A673 (cell line): ENCODE measurements at regions of chr2 and their contacts with region 1.

Region 1: DNA sequence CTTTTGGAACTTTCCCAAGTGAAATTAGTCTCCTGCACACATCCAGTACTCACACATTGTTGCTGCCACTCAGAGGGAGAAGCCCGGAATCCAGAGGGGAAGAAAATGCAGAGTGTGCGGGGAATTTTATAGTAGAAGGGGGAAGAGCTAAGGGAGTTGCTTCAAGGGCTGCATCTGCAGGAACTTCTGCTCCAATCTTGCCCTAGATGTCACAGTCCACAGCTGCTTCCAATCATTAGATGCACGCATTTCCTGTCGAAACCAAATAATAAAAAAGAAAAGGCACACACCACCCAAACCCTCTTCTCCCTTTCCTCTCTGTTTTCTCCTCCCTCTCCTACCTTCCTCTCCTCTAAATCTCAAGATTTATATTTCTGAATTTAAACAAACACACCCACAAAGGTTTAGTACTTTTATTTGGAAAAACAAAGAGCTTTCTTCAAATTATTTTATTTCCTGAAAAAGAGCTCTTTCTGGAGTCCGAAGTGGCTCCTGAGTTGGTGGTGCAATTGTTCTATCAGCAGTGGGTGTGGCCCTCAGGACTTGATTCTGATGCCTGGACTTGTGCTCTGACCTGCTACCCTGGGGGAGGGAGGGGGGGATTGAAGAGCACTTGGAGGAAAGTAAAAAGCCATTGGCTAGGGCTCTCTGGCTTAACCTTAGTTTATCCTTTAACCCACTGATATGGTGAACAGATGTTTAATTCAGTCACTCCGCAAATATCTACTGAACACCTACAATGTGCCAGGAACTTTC is 72.0 kb downstream of the KCNE4 start:
- DNase-seq: peak; percentile 88
- H3K4me3 ChIP-seq: peak overlapping the region; percentile 11
- H3K27ac ChIP-seq: peak overlapping the region; percentile 84
- H3K4me1 ChIP-seq: peaks cover 75% of the 10 kb centered on the region
- H3K27me3 ChIP-seq: no peaks in the 10 kb centered on the region
- CTCF ChIP-seq: no peak

Region 2: DNA sequence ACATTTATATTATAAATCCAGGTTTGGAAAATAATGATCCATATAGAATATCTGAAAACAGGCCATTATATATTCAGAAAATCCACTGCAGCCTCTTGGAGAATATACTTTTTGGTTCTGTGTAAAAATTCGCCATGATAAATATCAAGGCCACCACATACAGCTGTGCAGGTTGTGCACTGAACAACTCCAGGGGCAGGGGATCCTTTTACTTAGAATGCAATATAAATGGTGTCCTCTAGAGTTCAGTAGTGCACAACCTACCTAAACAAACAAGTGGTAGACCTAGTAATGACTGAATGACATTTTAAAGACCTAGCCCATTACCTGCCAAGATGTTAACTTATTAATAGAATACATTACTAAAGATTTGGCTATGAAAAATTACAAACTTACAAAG is 430.2 kb before region 1 on chr2:
- CTCF ChIA-PET with region 1: no interaction called
- POLR2A ChIA-PET with region 1: no interaction called
- intact Hi-C with region 1: no loop called
- DNase-seq: peak; percentile 44
- H3K4me3 ChIP-seq: no peak overlapping the region
- H3K27ac ChIP-seq: no peak overlapping the region
- H3K4me1 ChIP-seq: peaks cover 15% of the 10 kb centered on the region
- H3K27me3 ChIP-seq: no peaks in the 10 kb centered on the region
- CTCF ChIP-seq: peak; percentile 44; the same call in 1 of the 2 replicates

Region 3: DNA sequence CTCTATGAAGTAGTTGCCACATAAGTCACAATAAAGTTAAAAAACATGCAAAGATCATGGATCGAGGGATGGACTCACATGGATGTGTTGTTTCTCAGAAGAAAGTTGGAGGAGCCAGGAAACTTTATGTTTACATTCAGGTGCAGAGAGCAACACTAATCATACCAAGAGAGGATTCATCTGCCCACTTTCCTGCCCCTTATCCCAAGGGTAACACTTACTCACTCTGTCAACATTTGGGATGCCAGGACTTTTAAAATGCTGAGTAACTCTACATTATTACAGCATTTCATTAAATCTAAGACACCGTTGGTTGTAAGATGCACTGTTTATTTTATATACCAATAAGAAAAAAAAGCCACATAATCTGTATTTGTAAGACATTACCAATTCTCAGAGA is 98.4 kb after region 1 on chr2:
- CTCF ChIA-PET with region 1: no interaction called
- POLR2A ChIA-PET with region 1: no interaction called
- intact Hi-C with region 1: no loop called
- DNase-seq: no peak
- H3K4me3 ChIP-seq: no peak overlapping the region
- H3K27ac ChIP-seq: no peak overlapping the region
- H3K4me1 ChIP-seq: no peaks in the 10 kb centered on the region
- H3K27me3 ChIP-seq: no peaks in the 10 kb centered on the region
- CTCF ChIP-seq: no peak

Region 4: DNA sequence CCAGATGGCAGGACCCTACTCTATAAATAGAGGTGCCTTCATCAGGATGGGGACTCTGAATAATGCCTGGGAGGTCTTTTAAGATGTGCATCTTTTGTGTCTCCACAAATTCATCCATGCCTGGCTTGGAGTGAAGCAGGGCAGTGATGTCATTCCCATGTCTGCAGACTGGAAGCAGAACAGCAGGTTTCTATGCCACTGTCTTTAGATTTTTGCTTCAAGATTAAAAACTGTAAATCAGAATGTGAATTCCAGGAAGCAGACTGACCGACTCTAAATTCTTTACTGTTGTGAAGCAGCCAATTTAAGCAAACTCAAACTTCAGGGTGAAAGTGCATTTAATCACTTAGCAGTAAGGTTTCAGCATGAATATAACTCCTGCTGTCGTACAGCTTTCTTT is 318.8 kb after region 1 on chr2:
- CTCF ChIA-PET with region 1: no interaction called
- POLR2A ChIA-PET with region 1: no interaction called
- intact Hi-C with region 1: no loop called
- DNase-seq: no peak
- H3K4me3 ChIP-seq: no peak overlapping the region
- H3K27ac ChIP-seq: no peak overlapping the region
- H3K4me1 ChIP-seq: no peaks in the 10 kb centered on the region
- H3K27me3 ChIP-seq: no peaks in the 10 kb centered on the region
- CTCF ChIP-seq: no peak

Region 5: DNA sequence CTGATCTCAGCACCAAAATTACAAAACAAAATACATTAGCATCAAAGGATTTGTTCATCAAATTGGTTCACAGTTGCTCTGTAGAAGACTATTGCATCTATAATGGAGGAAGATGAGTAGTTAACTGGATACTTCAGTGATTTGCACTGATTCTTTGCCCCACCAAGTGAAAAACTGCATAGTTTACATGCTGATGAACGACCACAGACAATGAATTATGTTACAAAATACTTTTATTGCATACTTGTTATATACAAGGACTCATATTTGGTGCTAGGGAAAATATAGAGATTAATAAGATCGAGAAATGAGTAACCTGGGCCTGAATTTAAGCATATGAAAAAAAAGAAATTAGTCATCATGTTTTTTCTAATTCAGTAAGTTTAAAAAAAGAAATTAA is 371.0 kb after region 1 on chr2:
- CTCF ChIA-PET with region 1: no interaction called
- POLR2A ChIA-PET with region 1: no interaction called
- intact Hi-C with region 1: no loop called
- DNase-seq: no peak
- H3K4me3 ChIP-seq: no peak overlapping the region
- H3K27ac ChIP-seq: no peak overlapping the region
- H3K4me1 ChIP-seq: no peaks in the 10 kb centered on the region
- H3K27me3 ChIP-seq: no peaks in the 10 kb centered on the region
- CTCF ChIP-seq: no peak

Region 6: GRCh38 chr2:223537669-223538601 is 413.9 kb after region 1 on chr2:
- CTCF ChIA-PET with region 1: no interaction called
- POLR2A ChIA-PET with region 1: interaction called, 11 read pairs
- intact Hi-C with region 1: no loop called
- DNase-seq: peak; percentile 60
- H3K4me3 ChIP-seq: no peak overlapping the region
- H3K27ac ChIP-seq: peak overlapping the region; percentile 44
- H3K4me1 ChIP-seq: peaks cover 24% of the 10 kb centered on the region
- H3K27me3 ChIP-seq: no peaks in the 10 kb centered on the region
- CTCF ChIP-seq: no peak